ENCODE measurements at regions of chr21 and their contacts with region 1.

Region 1: DNA sequence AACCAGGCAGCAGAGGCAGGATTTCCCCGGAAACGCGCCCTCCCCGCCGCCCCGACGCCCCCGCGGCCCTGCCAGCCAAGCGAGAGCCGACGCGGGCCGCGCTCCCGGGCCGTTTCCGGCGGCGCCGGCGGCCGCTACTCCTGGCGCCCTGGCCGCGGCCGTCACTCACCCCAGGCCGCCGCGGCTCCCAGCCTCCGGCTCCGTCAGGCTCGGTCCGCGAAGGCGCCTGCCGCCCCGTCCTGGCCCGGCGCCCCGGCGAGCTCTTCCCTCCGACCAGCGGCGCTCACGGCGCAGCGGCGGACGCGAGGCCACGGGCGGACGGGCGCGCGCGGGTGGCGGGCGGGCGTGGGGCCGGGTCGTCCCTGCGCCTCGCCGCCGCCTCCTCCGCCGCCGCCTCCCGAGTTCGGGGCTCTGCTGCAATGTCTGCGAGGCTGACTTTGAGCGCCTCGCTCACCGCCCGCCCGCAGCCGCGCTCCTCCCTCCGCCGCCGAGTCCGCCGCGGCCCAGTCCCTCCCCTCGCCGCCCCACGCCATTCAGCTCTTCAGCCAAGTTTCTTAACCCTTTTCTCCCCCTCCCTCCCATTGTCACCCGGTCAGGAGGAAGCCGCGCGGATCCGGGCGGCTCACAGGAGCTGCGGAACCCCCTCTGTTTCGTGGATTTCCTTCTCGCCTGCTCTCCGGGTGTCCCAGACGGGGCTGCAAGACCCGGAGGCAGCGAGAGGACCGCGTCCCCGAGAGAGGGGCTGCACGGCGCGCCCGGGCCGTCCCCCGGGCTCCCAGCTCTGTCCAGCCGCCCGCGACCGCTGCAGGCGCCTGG is at the start of gene NRIP1:
- DNase-seq: peak; percentile 90 to 92
- ATAC-seq: peak; percentile 82
- total RNA-seq, gene NRIP1: 78.5 to 82.9 TPM

Region 2: GRCh38 chr21:14877570-14878228 is 187.1 kb before region 1 on chr21:
- intact Hi-C with region 1: loop called in 1 of 2 experiments (anchors 10 kb)
- DNase-seq: no peak
- ATAC-seq: peak; percentile 85

Measured in left colon (tissue), 2 donors.